Breast epithelium (tissue), 4 donors: ENCODE measurements at regions of chr10 and their contacts with region 1.

Region 1: DNA sequence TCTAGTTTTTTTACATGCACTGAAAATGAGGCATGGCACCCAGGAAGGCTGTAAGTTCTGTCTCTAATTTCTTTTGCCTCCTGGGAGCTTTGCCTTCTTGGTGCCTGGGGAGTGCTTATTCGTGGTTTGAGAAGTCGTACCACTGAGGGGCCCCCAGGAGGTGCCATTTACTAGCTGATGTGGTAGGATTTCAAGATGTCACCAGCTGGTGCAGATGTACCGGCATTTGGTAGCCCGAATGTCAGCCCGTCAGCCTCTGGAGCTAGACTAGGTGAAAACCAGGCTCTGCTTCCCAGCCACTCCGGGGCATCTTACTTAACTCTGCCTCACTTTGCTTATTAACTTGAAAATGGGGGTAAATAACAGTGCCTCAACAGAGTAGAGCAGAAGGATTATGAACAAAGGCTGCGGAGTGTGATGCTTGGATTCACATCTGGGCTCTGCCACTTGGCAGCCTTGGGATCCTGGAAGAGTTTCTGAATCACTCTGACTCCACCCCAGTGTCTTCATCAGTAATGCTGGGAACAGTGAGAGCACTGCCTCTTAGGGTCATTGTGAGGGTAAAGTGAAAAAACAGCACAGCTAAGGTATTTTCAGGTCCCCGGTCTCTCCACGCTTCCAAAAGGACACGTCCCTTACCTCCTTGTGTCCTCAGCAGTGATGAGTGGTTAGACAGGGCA is 31.4 kb upstream of the BTBD16 start:
- DNase-seq: no peak
- H3K4me3 ChIP-seq: no peak overlapping the region
- H3K27ac ChIP-seq: no peak overlapping the region
- H3K4me1 ChIP-seq: no peaks in the 10 kb centered on the region
- H3K27me3 ChIP-seq: no peaks in the 10 kb centered on the region
- CTCF ChIP-seq: no peak
- POLR2A ChIP-seq: no peak

Region 2: DNA sequence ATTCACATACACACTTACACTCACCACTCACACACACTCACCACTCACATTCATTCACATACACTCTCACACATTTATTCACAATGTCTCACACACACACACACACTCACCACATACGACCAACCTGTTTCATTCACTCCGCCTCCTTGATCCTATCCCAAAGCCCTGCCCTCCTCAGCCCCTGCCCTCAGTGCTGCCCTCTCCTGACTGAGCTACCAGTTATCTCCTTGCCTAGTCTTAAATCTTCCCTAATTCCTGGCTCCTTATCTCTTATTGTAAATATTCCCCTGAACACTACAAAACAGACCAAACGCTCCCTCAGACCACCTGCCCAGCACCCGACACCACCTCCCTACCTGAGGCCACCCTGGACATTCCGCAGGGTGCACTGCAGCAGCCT is 486.1 kb after region 1 on chr10:
- intact Hi-C with region 1: loop called (anchors 5 kb)
- DNase-seq: no peak
- H3K4me3 ChIP-seq: no peak overlapping the region
- H3K27ac ChIP-seq: no peak overlapping the region
- H3K4me1 ChIP-seq: no peaks in the 10 kb centered on the region
- H3K27me3 ChIP-seq: peaks cover 0 to 15% of the 10 kb centered on the region in 2 donors
- CTCF ChIP-seq: no peak
- POLR2A ChIP-seq: no peak